Caco-2 (cell line): ENCODE measurements at regions of chr4 and their contacts with region 1.

Region 1: GRCh38 chr4:62327612-62328297 is 1127.6 kb downstream of the ADGRL3 start:
- DNase-seq: no peak
- H3K4me3 ChIP-seq: no peak overlapping the region
- H3K4me3 Mint-ChIP-seq: no peak overlapping the region
- H3K27ac Mint-ChIP-seq: no peak overlapping the region
- H3K4me1 ChIP-seq: no peaks in the 10 kb centered on the region
- H3K4me1 Mint-ChIP-seq: no peaks in the 10 kb centered on the region
- H3K27me3 ChIP-seq: no peaks in the 10 kb centered on the region
- H3K27me3 Mint-ChIP-seq: no peaks in the 10 kb centered on the region
- CTCF ChIP-seq: no peak

Region 2: DNA sequence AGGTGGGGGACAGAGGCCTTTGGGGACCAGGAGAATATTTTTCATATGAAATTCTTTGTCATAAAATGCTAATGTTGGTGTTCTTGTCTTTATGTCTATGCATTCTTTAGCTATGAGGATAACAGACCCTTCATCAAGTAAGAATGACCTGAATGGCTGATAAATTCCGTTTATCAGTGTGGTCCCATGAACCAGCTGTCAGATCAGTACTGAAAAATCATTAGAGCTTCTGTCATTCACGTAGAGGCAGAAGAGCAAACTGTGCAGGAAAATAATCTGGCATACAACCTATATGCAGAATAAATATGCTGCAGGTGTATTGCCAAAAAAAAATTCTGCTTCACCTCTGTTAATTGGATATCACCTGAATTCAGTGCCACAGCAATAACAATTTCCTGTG is 299.0 kb before region 1 on chr4:
- CTCF ChIA-PET with region 1: no interaction called
- POLR2A ChIA-PET with region 1: interaction called, 13 read pairs
- intact Hi-C with region 1: no loop called
- DNase-seq: no peak
- H3K4me3 ChIP-seq: no peak overlapping the region
- H3K4me3 Mint-ChIP-seq: no peak overlapping the region
- H3K27ac Mint-ChIP-seq: no peak overlapping the region
- H3K4me1 ChIP-seq: no peaks in the 10 kb centered on the region
- H3K4me1 Mint-ChIP-seq: no peaks in the 10 kb centered on the region
- H3K27me3 ChIP-seq: no peaks in the 10 kb centered on the region
- H3K27me3 Mint-ChIP-seq: no peaks in the 10 kb centered on the region
- CTCF ChIP-seq: no peak

Region 3: GRCh38 chr4:62271107-62271506 is 56.6 kb before region 1 on chr4:
- CTCF ChIA-PET with region 1: no interaction called
- POLR2A ChIA-PET with region 1: no interaction called
- intact Hi-C with region 1: no loop called
- DNase-seq: no peak
- H3K4me3 ChIP-seq: no peak overlapping the region
- H3K4me3 Mint-ChIP-seq: no peak overlapping the region
- H3K27ac Mint-ChIP-seq: no peak overlapping the region
- H3K4me1 ChIP-seq: no peaks in the 10 kb centered on the region
- H3K4me1 Mint-ChIP-seq: no peaks in the 10 kb centered on the region
- H3K27me3 ChIP-seq: no peaks in the 10 kb centered on the region
- H3K27me3 Mint-ChIP-seq: no peaks in the 10 kb centered on the region
- CTCF ChIP-seq: no peak